Psoas muscle (tissue), 8 donors: ENCODE measurements at regions of chr18 and their contacts with region 1.

Region 1: GRCh38 chr18:72993256-72993655 is 125.5 kb upstream of the NETO1 start:
- DNase-seq: no peak
- ATAC-seq: no peak
- H3K4me3 ChIP-seq: no peak overlapping the region
- H3K27ac ChIP-seq: no peak overlapping the region
- H3K4me1 ChIP-seq: no peaks in the 10 kb centered on the region
- H3K27me3 ChIP-seq: no peaks in the 10 kb centered on the region
- CTCF ChIP-seq: no peak

Region 2: DNA sequence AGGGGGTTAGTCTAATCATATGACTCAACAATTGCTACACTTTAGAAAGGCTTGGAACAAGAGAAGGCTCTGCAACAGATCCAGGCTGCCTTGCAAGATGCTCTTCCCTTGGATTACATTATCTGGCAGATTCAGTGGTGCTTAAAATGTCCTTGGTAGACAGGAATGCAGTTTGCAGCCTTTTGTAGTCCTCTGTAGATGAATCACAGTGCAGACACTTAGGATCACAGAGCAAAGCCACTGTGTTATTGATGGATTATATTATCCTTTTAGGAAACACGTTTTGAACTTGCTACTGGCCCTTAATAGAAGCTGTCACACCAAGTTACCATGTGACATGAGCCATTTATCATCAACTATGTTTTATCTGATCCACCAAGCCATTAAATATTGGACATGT is 601.3 kb before region 1 on chr18:
- intact Hi-C with region 1: loop called in 1 of 2 experiments (anchors 5 kb)
- DNase-seq: no peak
- ATAC-seq: no peak
- H3K4me3 ChIP-seq: no peak overlapping the region
- H3K27ac ChIP-seq: no peak overlapping the region
- H3K4me1 ChIP-seq: no peaks in the 10 kb centered on the region
- H3K27me3 ChIP-seq: no peaks in the 10 kb centered on the region
- CTCF ChIP-seq: no peak

Region 3: DNA sequence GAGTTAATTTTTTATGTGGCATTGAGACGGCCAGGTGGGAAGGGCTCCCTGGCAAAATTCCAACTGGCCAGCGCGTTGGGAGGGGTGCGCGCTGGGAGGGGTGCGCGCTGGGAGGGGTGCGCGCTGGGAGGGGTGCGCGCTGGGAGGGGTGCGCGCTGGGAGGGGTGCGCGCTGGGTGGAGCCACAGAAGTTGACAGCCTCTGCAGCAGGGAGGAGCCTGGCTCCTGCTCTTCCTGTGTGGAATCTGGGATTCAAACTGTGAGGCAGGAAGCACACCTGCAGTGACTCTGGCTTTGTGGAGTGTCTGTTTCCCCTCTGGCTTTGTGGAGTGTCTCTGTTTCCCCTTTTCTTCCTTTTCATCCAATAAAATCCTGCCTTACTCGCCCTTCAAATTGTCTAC is 301.2 kb before region 1 on chr18:
- intact Hi-C with region 1: no loop called
- DNase-seq: no peak
- ATAC-seq: no peak
- H3K4me3 ChIP-seq: no peak overlapping the region
- H3K27ac ChIP-seq: no peak overlapping the region
- H3K4me1 ChIP-seq: no peaks in the 10 kb centered on the region
- H3K27me3 ChIP-seq: no peaks in the 10 kb centered on the region
- CTCF ChIP-seq: no peak